A549 (cell line): ENCODE measurements at regions of chr3 and their contacts with region 1.

Region 1: DNA sequence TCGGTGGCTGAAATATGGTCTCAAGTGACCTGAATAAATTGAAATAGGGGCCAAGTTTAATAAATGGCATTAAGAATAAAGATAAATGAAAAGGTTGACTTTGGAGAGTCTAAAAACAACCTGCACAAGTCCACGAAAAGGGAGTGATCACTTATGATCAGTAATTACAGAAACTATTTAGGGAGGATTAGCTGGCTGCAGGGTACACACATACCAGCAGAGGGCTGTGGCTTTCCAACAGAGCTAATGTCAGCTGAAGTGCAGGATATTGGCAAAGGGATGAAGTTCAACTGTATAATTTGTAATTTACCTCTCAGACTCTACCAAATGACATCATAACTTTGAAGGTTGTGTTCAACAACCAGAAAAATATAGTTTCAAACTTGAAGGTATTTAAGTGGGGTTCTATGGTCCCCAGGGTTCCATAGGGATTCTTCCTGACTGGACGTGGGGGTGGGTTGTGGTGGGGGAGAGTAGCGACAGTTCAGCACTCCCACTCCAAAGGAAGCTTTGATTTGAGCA is 86.9 kb downstream of the SYNPR start:
- DNase-seq: peak in 1 of 2 experiments; percentile 3
- ATAC-seq: peak in 1 of 2 experiments; percentile 31; a peak in 1 of 6 replicates
- H3K4me3 ChIP-seq: no peak overlapping the region
- H3K27ac ChIP-seq: no peak overlapping the region
- H3K4me1 ChIP-seq: no peaks in the 10 kb centered on the region
- CTCF ChIP-seq: no peak
- EP300 ChIP-seq: no peak
- POLR2A ChIP-seq: no peak
- RAD21 ChIP-seq: no peak

Region 2: DNA sequence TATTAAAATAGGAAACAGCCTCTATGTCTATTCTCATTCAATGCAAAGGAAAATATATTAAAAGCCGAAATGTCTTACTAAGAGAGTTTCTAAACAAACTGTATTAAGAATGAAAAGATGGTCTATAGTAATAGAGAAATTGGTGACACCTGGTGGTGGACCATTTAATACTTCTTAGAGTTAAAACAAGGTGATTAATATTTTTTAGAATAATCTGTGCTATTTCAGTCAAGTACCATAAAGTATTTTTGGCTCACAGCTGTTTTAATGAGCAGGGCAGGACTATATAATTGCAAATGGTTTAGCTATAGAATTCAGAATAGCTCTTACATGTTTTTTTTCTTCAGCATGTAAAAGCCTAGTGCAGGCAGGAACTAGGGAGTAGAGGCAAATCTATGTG is 31.1 kb before region 1 on chr3:
- CTCF ChIA-PET with region 1: no interaction called
- POLR2A ChIA-PET with region 1: no interaction called
- DNase-seq: peak in 1 of 2 experiments; percentile 6
- ATAC-seq: no peak
- H3K4me3 ChIP-seq: no peak overlapping the region
- H3K27ac ChIP-seq: no peak overlapping the region
- H3K4me1 ChIP-seq: no peaks in the 10 kb centered on the region
- CTCF ChIP-seq: no peak
- EP300 ChIP-seq: no peak
- POLR2A ChIP-seq: no peak
- RAD21 ChIP-seq: 0 out of 5 replicates have a peak, but pooled peaks of 1 of the 2 experiments have one; percentile 8

Region 3: GRCh38 chr3:63349583-63350521 is 15.1 kb before region 1 on chr3:
- CTCF ChIA-PET with region 1: interaction called, 12 read pairs
- POLR2A ChIA-PET with region 1: no interaction called
- DNase-seq: peak; percentile 5 to 49
- ATAC-seq: peak; percentile 74 to 86; a peak in 4 of 6 replicates
- H3K4me3 ChIP-seq: no peak overlapping the region
- H3K27ac ChIP-seq: no peak overlapping the region
- H3K4me1 ChIP-seq: no peaks in the 10 kb centered on the region
- CTCF ChIP-seq: peak; percentile 65
- EP300 ChIP-seq: no peak
- POLR2A ChIP-seq: no peak
- RAD21 ChIP-seq: peak; percentile 59 to 63